ENCODE measurements at regions of chr5 and their contacts with region 1.

Region 1: GRCh38 chr5:38556599-38557305 is at the start of gene LIFR:
- DNase-seq: no peak
- ATAC-seq: peak; percentile 93
- H3K4me3 ChIP-seq: peak within 1 kb of the TSS; percentile 89 to 95
- H3K27ac ChIP-seq: peak within 1 kb of the TSS; percentile 96
- H3K4me1 ChIP-seq: peaks cover 35% of the 10 kb centered on the region
- H3K27me3 ChIP-seq: no peaks in the 10 kb centered on the region
- CTCF ChIP-seq: no peak
- total RNA-seq, gene LIFR: 91.3 TPM

Region 2: DNA sequence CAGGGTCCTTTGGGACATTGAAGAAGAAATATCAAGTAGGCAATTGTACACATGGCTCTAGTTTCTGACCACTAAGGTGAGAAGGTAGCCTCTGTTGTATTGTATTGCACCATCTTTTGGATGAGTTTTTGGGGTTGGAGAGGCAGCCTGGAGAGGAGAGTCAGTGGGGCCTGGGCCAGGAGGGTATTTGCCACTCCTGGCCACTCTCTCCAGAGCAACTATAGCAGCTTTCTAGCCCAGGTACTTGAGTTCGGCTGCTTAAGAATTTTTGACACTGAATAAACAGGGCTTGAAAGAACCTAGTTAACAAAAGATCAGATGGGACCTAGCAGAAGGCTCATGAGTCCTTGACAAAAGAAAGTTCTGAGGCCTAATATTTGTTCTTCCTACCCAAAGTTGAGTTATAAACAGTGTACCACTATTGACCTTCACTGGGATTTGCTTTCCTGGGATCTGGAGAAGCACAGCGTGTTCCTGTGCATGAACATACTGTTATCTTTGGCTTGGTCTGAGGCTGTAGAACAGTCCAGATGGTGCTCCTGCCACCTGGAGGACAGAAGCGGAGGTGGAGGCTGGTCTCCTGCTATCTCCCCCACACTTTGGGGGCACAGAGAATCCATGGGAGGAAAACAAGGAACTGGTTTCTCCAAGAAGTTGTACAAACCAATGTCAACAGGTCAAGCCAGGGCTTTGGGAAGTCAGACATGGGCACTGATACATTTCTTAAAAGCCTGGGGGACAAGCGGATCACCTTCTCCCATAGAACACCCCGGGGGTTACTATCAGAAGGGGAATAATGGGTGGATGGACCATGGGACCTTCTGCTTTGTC is 110.1 kb after region 1 on chr5:
- CTCF ChIA-PET with region 1: no interaction called
- POLR2A ChIA-PET with region 1: no interaction called
- in situ Hi-C with region 1: no loop called
- intact Hi-C with region 1: loop called (anchors 10 kb)
- DNase-seq: no peak
- ATAC-seq: peak; percentile 78; the same call in 1 of the 2 replicates
- H3K4me3 ChIP-seq: no peak overlapping the region
- H3K27ac ChIP-seq: peak overlapping the region; percentile 36; the same call in 1 of the 2 replicates
- H3K4me1 ChIP-seq: peaks cover 17% of the 10 kb centered on the region
- H3K27me3 ChIP-seq: no peaks in the 10 kb centered on the region
- CTCF ChIP-seq: peak; percentile 60

Region 3: DNA sequence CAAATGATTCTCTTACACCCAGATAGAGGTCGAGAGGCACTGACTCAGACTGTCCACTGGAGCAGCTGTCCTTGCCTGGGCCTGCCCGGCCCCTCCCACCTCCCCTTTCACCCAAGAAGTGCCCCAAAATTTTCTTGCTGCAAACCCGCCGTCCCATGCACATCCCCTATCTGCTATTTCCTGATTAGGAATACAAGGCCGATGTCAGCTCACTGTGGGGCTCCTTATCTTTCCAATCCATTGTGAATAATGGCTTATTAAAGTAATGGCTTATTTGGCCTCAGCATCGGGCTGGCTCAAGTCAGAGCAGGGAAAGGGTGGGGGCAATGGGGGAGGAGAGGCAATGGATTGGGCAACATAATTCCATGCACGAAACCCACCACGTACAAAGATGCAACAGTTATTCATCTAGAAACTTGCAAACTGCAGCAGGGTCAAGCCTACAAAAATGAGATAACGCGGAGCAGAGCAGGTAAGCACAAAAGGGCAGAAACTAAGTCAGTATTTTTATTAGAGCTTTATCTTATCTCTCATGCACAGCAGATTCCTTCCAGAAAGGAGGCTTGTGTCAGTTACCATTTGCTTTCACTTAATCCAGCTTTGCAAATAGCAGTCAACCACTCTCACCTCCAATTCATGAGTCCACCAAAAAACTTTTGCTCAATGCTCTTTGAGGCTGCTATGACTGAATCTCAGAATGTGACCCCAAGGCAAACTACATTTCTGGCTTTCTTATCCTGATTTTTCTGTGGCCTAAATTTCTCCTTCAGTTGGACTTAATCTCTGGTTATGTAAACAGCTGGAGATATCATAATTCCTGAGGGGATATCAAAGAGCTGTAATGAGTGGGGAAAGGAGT is 150.8 kb after region 1 on chr5:
- CTCF ChIA-PET with region 1: no interaction called
- POLR2A ChIA-PET with region 1: no interaction called
- in situ Hi-C with region 1: no loop called
- intact Hi-C with region 1: no loop called
- DNase-seq: no peak
- ATAC-seq: peak; percentile 56; the same call in 1 of the 2 replicates
- H3K4me3 ChIP-seq: no peak overlapping the region
- H3K27ac ChIP-seq: peak overlapping the region; percentile 69
- H3K4me1 ChIP-seq: peaks cover 20% of the 10 kb centered on the region
- H3K27me3 ChIP-seq: no peaks in the 10 kb centered on the region
- CTCF ChIP-seq: no peak